Activated CD4-positive, alpha-beta memory T cell treated with anti-CD3 and anti-CD28 coated beads for 36 hours (primary cell): ENCODE measurements at regions of chr6 and their contacts with region 1.

Region 1: GRCh38 chr6:42383421-42384205 is 68.1 kb downstream of the TRERF1 start:
- DNase-seq: peak; percentile 64
- H3K4me3 Mint-ChIP-seq: peak overlapping the region; percentile 33
- H3K27ac Mint-ChIP-seq: peak overlapping the region; percentile 93
- H3K4me1 Mint-ChIP-seq: peaks cover 85% of the 10 kb centered on the region
- H3K27me3 Mint-ChIP-seq: no peaks in the 10 kb centered on the region

Region 2: DNA sequence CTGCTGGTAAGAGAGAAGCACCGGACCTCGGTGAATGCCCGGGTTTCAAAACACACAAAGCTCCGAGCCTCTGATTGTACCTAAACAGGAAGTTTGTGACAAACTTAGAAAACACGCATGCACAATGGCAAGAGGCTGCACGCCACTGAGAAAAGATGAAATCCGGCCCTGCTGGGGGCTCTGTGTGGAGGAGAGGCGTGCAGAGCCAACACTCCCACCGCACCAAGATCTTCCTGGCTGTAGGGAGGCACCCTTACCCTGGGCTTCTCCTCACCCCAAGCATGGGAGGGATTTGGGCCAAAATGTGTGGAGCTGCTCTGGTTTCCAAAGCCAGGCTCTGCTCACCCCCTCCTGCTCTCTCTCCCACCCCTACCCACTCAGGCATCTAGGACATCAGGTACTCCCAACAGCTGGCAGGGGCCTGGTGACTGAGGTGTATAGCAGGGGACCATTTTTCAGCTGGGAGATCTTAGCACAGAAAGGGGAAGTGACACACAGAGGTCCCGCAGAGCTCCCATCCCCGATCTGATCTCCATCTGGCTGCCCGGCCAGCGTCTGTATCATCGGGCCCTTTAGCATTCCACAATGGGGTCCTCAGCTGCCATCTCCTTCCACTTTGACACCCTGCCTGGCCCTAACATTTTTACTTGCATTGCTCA is 16.1 kb before region 1 on chr6:
- CTCF ChIA-PET with region 1: no interaction called
- POLR2A ChIA-PET with region 1: interaction called, 13 read pairs
- intact Hi-C with region 1: loop called (anchors 1 kb)
- DNase-seq: peak; percentile 48
- H3K4me3 Mint-ChIP-seq: peak overlapping the region; percentile 67
- H3K27ac Mint-ChIP-seq: peak overlapping the region; percentile 92
- H3K4me1 Mint-ChIP-seq: peaks cover 73% of the 10 kb centered on the region
- H3K27me3 Mint-ChIP-seq: no peaks in the 10 kb centered on the region